Activated CD4-positive, alpha-beta memory T cell treated with anti-CD3 and anti-CD28 coated beads, Interleukin-2, amount 10 ng/mL, durations not matched to agents 7 days and 5 days (primary cell): ENCODE measurements at regions of chrX and their contacts with region 1.

Region 1: GRCh38 chrX:110412971-110413721 is 54.5 kb downstream of the RTL9 start:
- DNase-seq: peak; percentile 71
- H3K4me3 Mint-ChIP-seq: no peak overlapping the region
- H3K27ac Mint-ChIP-seq: no peak overlapping the region
- H3K4me1 Mint-ChIP-seq: peaks cover 9% of the 10 kb centered on the region
- H3K27me3 Mint-ChIP-seq: no peaks in the 10 kb centered on the region

Region 2: GRCh38 chrX:110146521-110146920 is 266.6 kb before region 1 on chrX:
- CTCF ChIA-PET with region 1: interaction called, 18 read pairs
- POLR2A ChIA-PET with region 1: no interaction called
- DNase-seq: peak; percentile 22
- H3K4me3 Mint-ChIP-seq: no peak overlapping the region
- H3K27ac Mint-ChIP-seq: no peak overlapping the region
- H3K4me1 Mint-ChIP-seq: peaks cover 7% of the 10 kb centered on the region
- H3K27me3 Mint-ChIP-seq: no peaks in the 10 kb centered on the region

Region 3: GRCh38 chrX:110156167-110156754 is 256.9 kb before region 1 on chrX:
- CTCF ChIA-PET with region 1: interaction called, 250 read pairs
- POLR2A ChIA-PET with region 1: no interaction called
- DNase-seq: no peak
- H3K4me3 Mint-ChIP-seq: no peak overlapping the region
- H3K27ac Mint-ChIP-seq: no peak overlapping the region
- H3K4me1 Mint-ChIP-seq: peaks cover 13% of the 10 kb centered on the region
- H3K27me3 Mint-ChIP-seq: no peaks in the 10 kb centered on the region

Region 4: GRCh38 chrX:110432091-110432905 is 19.2 kb after region 1 on chrX:
- CTCF ChIA-PET with region 1: no interaction called
- POLR2A ChIA-PET with region 1: no interaction called
- DNase-seq: no peak
- H3K4me3 Mint-ChIP-seq: no peak overlapping the region
- H3K27ac Mint-ChIP-seq: no peak overlapping the region
- H3K4me1 Mint-ChIP-seq: no peaks in the 10 kb centered on the region
- H3K27me3 Mint-ChIP-seq: peaks cover 4% of the 10 kb centered on the region

Region 5: GRCh38 chrX:110504947-110505346 is 91.8 kb after region 1 on chrX:
- CTCF ChIA-PET with region 1: no interaction called
- POLR2A ChIA-PET with region 1: no interaction called
- DNase-seq: no peak
- H3K4me3 Mint-ChIP-seq: no peak overlapping the region
- H3K27ac Mint-ChIP-seq: no peak overlapping the region
- H3K4me1 Mint-ChIP-seq: no peaks in the 10 kb centered on the region
- H3K27me3 Mint-ChIP-seq: no peaks in the 10 kb centered on the region